ENCODE measurements at regions of chr2 and their contacts with region 1.

Region 1: GRCh38 chr2:177618255-177619253 is 226.0 kb downstream of the AGPS start:
- DNase-seq: peak; percentile 93 to 96
- ATAC-seq: peak; percentile 97 to 99 (median 98)
- H3K4me3 ChIP-seq: peak overlapping the region; percentile 77
- H3K27ac ChIP-seq: peak overlapping the region; percentile 97
- H3K4me1 ChIP-seq: no peaks in the 10 kb centered on the region
- H3K27me3 ChIP-seq: no peaks in the 10 kb centered on the region
- CTCF ChIP-seq: no peak

Region 2: GRCh38 chr2:177501186-177501585 is 117.4 kb before region 1 on chr2:
- intact Hi-C with region 1: loop called in 1 of 2 experiments (anchors 1 kb)
- DNase-seq: no peak
- ATAC-seq: no peak
- H3K4me3 ChIP-seq: no peak overlapping the region
- H3K27ac ChIP-seq: no peak overlapping the region
- H3K4me1 ChIP-seq: no peaks in the 10 kb centered on the region
- H3K27me3 ChIP-seq: no peaks in the 10 kb centered on the region
- CTCF ChIP-seq: no peak

Region 3: DNA sequence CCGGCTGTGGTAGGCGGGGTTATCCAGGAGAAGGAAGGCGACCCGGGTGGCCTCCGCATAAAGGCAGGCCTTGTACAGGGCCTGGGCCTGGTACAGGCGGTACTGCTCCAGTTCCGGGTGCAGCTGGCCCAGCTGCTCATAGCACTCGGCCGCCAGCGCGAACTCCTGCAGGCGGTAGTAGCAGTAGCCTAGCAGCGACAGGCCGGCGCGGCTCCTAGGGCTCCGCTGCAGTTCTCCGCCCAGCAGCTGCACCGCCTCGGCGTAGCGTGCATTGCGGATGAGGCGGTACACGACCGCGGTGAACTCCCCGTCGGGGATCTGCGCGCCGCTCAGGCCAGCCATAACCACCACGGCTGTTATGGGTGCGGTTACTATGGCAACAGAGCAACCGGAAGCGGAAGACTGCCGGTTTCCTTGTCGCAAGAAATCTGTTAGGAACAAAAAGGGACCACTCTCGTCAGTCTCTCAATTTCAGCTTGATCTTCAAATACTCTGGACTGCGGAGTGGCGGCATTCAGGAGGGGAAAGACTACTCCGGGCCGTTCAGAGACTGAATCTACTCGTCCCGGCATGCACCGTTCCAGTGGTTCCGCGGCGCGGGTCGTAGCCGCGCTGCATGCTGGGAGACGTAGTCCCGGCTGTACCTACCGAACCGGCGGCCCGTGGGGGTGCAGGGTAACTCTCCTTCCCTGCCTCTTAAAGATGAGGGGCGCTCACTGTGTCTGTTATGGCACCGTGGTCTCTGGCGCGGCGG is 66.0 kb before region 1 on chr2:
- intact Hi-C with region 1: loop called (anchors 5 kb)
- DNase-seq: peak; percentile 88 to 92
- ATAC-seq: peak; percentile 96 to 99 (median 98)
- H3K4me3 ChIP-seq: peak overlapping the region; percentile 96
- H3K27ac ChIP-seq: peak overlapping the region; percentile 96
- H3K4me1 ChIP-seq: peaks cover 4% of the 10 kb centered on the region
- H3K27me3 ChIP-seq: no peaks in the 10 kb centered on the region
- CTCF ChIP-seq: no peak

Region 4: GRCh38 chr2:177724398-177725287 is 106.1 kb after region 1 on chr2:
- intact Hi-C with region 1: loop called in 1 of 2 experiments (anchors 10 kb)
- DNase-seq: peak; percentile 28 to 54
- ATAC-seq: peak; percentile 63 to 87 (median 76)
- H3K4me3 ChIP-seq: no peak overlapping the region
- H3K27ac ChIP-seq: no peak overlapping the region
- H3K4me1 ChIP-seq: peaks cover 4% of the 10 kb centered on the region
- H3K27me3 ChIP-seq: no peaks in the 10 kb centered on the region
- CTCF ChIP-seq: peak; percentile 84